Calu3 (cell line): ENCODE measurements at regions of chrX and their contacts with region 1.

Region 1: GRCh38 chrX:39149761-39150160 is 348.5 kb downstream of the MID1IP1 start:
- DNase-seq: peak; percentile 60
- H3K4me3 Mint-ChIP-seq: no peak overlapping the region
- H3K27ac Mint-ChIP-seq: no peak overlapping the region
- H3K4me1 Mint-ChIP-seq: peaks cover 13% of the 10 kb centered on the region
- H3K27me3 Mint-ChIP-seq: peaks cover 27% of the 10 kb centered on the region
- CTCF ChIP-seq: peak; percentile 47

Region 2: GRCh38 chrX:38754102-38754790 is 395.5 kb before region 1 on chrX:
- CTCF ChIA-PET with region 1: interaction called, 4 read pairs
- intact Hi-C with region 1: loop called (anchors 5 kb)
- DNase-seq: peak; percentile 51
- H3K4me3 Mint-ChIP-seq: no peak overlapping the region
- H3K27ac Mint-ChIP-seq: no peak overlapping the region
- H3K4me1 Mint-ChIP-seq: no peaks in the 10 kb centered on the region
- H3K27me3 Mint-ChIP-seq: peaks cover 40% of the 10 kb centered on the region
- CTCF ChIP-seq: peak; percentile 52

Region 3: DNA sequence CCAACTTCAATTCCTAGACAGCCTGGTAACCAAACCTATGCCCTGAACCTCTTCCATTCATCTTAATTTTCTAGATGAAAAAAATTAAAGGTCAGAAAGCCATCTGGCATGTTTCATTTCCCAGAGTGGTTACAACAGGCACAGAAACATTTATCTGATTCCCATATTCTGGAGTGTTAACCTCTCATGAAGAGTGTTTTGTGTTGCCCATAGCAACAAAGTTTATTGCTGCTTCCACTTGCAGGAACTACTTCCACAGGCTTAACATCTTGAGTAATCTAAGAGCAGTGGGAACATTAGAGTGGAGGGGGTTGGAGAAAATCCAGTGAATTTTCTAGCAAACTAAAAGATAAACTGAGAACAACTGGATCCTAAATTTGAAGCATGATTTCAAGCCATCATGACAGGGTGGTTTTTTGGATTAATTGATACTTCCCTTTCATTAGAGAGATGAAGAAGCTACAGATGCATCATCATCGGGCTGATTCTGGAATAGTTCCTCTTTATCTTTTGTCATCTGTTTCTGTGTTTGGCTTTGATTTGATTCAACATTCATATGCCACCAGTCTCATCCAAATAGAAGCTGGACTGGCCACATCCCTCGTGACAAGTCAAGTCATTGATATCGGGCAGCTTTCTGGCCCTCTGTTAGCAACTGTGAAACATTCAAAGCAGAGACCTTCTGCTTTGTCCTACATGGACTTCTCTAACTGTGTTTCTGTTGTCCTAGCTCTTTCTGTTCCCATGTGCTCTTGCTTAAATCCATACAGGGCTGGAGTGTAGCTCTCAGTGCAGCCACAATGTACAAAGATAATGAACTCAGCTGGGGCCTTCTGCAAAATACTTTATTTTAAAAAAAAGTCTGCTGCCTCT is 181.2 kb before region 1 on chrX:
- CTCF ChIA-PET with region 1: no interaction called
- intact Hi-C with region 1: no loop called
- DNase-seq: no peak
- H3K4me3 Mint-ChIP-seq: no peak overlapping the region
- H3K27ac Mint-ChIP-seq: no peak overlapping the region
- H3K4me1 Mint-ChIP-seq: no peaks in the 10 kb centered on the region
- H3K27me3 Mint-ChIP-seq: no peaks in the 10 kb centered on the region
- CTCF ChIP-seq: no peak